ENCODE measurements at regions of chr12 and their contacts with region 1.

Region 1: GRCh38 chr12:3299929-3300832 is 190.8 kb upstream of the PRMT8 start:
- DNase-seq: peak; percentile 99
- H3K4me3 ChIP-seq: peak overlapping the region in 2 of 3 experiments; percentile 9 to 38
- H3K27ac ChIP-seq: peak overlapping the region; percentile 94
- H3K4me1 ChIP-seq: peaks cover 46% of the 10 kb centered on the region
- H3K27me3 ChIP-seq: no peaks in the 10 kb centered on the region
- CTCF ChIP-seq: peak; percentile 93 to 99

Region 2: DNA sequence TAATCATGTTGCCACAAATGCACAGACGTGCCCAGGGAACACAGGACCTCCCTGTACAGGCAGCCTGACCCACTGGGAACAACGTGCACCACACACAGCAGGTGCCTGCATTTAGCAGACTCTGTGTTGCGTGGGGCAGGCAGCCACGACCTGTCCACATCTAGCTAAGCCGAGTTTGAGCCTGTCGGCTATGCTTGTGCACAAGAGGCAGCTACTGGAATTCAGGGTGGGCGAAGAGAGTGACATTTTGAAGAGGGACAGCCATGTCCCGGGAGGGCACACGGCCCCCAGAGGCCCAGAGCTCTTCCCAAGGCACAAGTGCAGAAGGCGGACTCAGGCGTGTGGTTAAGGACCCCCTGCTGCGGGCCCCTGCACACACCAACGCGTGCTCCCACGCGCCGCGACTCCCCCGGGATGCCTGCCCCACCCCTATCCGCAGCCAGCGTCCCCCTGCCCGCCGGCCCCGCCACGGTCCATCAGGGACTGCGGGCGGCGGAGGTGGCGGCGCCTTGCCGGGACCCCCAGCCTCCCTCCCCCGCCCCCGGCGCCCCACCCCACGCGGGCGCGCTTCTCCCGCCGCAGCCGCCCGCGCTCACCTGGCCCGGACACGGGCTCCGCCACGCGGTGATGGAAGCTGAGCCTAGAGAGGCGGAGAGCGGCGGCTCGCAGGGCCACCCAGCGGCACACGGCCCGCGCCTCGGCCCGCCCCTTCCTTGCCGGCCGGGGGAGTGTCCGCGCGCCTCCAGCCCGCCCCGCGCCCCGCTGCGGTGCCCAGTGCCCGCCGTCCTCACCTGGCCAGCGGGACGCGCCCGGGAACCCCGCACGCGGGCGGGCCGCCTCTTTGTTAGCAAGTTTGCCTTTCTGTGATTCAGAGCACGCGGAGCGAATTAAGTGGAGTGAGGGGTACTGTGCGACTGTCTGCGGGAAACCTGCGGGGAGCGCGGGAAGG is 65.6 kb after region 1 on chr12:
- CTCF ChIA-PET with region 1: interaction called, 14 read pairs
- dilution Hi-C with region 1: no loop called
- in situ Hi-C with region 1: no loop called
- intact Hi-C with region 1: loop called (anchors 5 kb)
- DNase-seq: peak; percentile 53
- H3K4me3 ChIP-seq: peak overlapping the region; percentile 43 to 71 (median 67)
- H3K27ac ChIP-seq: no peak overlapping the region
- H3K4me1 ChIP-seq: peaks cover 10% of the 10 kb centered on the region
- H3K27me3 ChIP-seq: no peaks in the 10 kb centered on the region
- CTCF ChIP-seq: peak in 1 of 2 donors; percentile 7

Region 3: GRCh38 chr12:3405821-3406220 is 105.6 kb after region 1 on chr12:
- CTCF ChIA-PET with region 1: no interaction called
- dilution Hi-C with region 1: no loop called
- in situ Hi-C with region 1: no loop called
- intact Hi-C with region 1: no loop called
- DNase-seq: no peak
- H3K4me3 ChIP-seq: no peak overlapping the region
- H3K27ac ChIP-seq: no peak overlapping the region
- H3K4me1 ChIP-seq: no peaks in the 10 kb centered on the region
- H3K27me3 ChIP-seq: no peaks in the 10 kb centered on the region
- CTCF ChIP-seq: no peak

Region 4: DNA sequence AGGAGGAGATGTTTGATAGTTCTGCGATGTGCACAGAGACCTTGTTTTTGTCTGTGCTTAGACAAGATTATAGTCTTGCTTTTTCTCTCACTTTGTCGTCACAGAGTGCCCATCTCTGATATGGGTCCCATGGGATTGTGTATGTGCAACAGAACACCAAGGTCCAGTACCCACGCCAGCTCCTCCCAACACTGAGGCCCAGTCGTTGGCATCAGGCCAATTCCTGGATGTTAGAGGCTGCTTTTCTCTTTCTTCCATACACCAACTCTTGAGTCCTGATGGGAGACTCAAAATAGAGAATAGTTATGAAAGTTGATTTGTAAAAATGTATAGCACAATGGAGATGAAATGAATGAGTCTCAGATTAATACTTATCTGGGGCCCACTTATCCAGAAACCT is 168.1 kb after region 1 on chr12:
- CTCF ChIA-PET with region 1: no interaction called
- dilution Hi-C with region 1: no loop called
- in situ Hi-C with region 1: no loop called
- intact Hi-C with region 1: no loop called
- DNase-seq: no peak
- H3K4me3 ChIP-seq: no peak overlapping the region
- H3K27ac ChIP-seq: no peak overlapping the region
- H3K4me1 ChIP-seq: peaks cover 13% of the 10 kb centered on the region
- H3K27me3 ChIP-seq: no peaks in the 10 kb centered on the region
- CTCF ChIP-seq: no peak

Region 5: DNA sequence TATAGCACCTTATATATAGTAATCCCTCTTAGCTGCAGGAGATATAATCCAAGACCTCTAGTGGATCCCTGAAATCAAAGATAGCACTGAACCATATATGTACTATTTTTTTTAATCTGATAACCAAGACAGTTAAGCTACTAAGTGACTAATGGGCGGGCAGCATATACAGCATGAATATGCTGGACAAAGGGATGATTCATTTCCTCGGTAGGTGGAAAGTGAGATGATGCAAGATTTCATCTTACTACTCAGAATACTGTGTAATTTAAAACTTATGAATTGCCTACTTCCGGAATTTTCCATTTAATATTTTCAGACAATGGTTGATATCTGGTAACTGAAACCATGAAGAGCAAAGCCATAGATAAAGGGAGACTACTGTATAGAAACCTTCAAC is 227.0 kb after region 1 on chr12:
- CTCF ChIA-PET with region 1: interaction called, 8 read pairs
- dilution Hi-C with region 1: no loop called
- in situ Hi-C with region 1: loop called in 1 of 2 experiments (anchors 25 kb)
- intact Hi-C with region 1: loop called (anchors 1 kb)
- DNase-seq: peak; percentile 90
- H3K4me3 ChIP-seq: no peak overlapping the region
- H3K27ac ChIP-seq: peak overlapping the region; percentile 92
- H3K4me1 ChIP-seq: peaks cover 24% of the 10 kb centered on the region
- H3K27me3 ChIP-seq: no peaks in the 10 kb centered on the region
- CTCF ChIP-seq: no peak

Region 6: GRCh38 chr12:3559601-3560294 is 259.6 kb after region 1 on chr12:
- CTCF ChIA-PET with region 1: interaction called, 4 read pairs
- dilution Hi-C with region 1: no loop called
- in situ Hi-C with region 1: no loop called
- intact Hi-C with region 1: loop called (anchors 5 kb)
- DNase-seq: no peak
- H3K4me3 ChIP-seq: no peak overlapping the region
- H3K27ac ChIP-seq: no peak overlapping the region
- H3K4me1 ChIP-seq: no peaks in the 10 kb centered on the region
- H3K27me3 ChIP-seq: no peaks in the 10 kb centered on the region
- CTCF ChIP-seq: no peak

Region 7: DNA sequence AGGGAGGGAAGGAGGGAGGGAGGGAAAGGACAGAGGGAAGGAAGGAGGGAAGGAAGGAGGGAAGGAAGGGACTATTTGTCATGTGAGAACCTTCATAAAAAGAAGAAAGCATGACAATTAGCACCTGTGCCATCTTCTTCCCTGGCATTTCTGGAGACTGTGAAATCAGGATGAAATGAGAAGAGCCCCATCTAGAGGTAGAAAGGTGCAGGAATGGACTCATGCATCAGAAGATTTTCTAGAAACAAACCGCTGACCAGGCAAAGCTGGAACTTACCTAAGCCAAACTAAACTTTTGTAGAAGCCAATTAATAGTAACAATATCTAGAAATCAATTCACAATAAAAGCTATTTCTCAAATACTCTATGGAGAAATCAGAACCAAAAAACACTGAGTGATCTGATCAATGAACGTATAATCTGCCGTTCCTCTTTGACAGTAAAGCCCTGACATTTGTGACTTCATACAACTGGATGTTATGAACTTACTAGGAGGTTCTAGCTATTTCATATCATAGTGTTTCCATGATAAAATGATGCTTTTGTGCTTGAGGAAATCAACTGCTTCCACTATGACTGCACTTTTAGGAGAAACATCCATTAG is 477.1 kb after region 1 on chr12:
- CTCF ChIA-PET with region 1: interaction called, 5 read pairs
- dilution Hi-C with region 1: no loop called
- in situ Hi-C with region 1: loop called (anchors 5 to 10 kb)
- intact Hi-C with region 1: loop called (anchors 1 kb)
- DNase-seq: peak; percentile 35
- H3K4me3 ChIP-seq: no peak overlapping the region
- H3K27ac ChIP-seq: no peak overlapping the region
- H3K4me1 ChIP-seq: no peaks in the 10 kb centered on the region
- H3K27me3 ChIP-seq: no peaks in the 10 kb centered on the region
- CTCF ChIP-seq: peak; percentile 77 to 83

Region 8: DNA sequence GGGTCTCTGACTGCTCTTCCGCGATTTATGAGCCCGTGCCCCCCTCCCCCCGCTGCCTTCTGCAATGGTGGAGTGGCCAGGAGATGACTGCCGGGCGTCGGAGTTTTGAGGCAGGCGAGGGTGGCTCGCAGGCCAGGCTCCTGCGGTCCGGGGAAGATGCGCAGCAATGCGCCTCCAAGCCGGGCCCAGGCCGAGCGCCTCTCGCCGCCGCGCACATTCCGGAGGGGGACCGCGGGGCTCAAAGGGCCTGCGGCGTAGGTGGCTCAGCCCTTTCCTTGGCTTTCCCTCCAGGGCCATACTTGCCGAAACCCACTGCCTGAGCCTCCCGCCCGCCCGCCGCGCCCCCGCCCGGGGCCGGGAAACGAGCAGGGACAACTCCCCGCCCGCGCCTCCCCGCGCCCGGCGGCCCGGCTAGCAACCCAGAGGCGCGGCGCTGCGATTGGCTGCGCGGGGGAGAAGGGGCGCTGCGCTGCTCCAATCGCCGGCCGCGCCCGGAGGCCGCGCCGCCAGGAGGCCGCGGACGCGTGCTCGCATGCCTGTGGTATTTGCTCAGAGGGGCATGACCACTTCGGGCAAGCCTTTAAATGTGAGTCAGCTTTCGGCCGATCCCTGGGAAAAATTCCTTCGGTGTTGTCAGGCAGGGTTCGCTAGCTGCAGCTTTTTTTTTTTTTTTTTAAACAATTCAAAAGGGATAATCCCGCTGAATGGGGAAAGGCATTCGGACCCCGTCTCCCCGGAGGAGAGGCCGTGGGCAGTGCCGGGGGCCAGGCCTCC is 730.9 kb after region 1 on chr12:
- CTCF ChIA-PET with region 1: no interaction called
- dilution Hi-C with region 1: no loop called
- in situ Hi-C with region 1: no loop called
- intact Hi-C with region 1: loop called (anchors 1 kb)
- DNase-seq: peak; percentile 99
- H3K4me3 ChIP-seq: peak overlapping the region in 1 of 3 experiments; percentile 25
- H3K27ac ChIP-seq: peak overlapping the region; percentile 91
- H3K4me1 ChIP-seq: peaks cover 42% of the 10 kb centered on the region
- H3K27me3 ChIP-seq: no peaks in the 10 kb centered on the region
- CTCF ChIP-seq: no peak

Measured in mammary epithelial cell (primary cell).